ENCODE measurements at regions of chr11 and their contacts with region 1.

Region 1: DNA sequence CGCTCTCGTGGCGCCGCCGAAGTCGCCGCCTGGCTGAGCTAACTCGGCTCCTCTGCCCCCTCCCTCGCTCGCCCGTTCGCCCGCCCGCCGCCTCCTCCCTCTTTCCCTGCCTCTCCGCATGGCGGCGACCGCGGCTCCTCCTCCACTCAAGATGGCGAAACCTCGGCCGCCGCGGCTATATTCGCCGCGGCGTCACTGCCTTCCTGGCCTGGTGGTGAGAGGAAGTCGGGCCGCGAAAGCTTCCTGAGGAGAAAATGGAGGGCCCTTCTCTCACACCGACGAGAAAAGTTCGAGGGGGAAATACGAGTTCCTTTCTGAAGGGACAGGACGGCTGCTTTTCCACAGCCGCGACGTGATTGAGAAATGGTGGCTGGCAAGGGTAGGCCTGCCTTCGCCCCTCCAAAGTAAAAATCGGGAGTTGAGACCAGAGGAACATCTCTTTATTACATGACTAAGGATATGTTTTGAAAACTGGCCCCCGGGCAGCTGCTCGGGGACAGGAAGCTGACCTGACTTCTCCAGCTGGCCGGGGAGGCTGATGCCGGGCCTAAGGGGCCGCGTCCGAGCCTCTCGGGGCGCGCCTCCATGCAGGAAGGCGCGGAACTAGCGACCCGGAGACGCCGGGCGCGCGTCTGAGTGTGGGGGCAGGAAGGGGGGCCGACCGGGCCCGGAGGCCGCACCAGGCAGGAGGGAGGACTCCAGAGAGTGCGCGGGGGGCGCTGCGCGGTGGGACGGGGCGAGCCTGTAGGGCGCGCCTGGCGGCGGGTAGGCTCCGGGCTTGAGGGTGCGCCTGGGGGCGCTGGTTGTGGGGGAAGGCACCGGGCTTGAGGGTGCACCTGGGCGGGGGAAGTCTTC is at the start of gene DDX6:
- DNase-seq: peak; percentile 93
- H3K4me3 Mint-ChIP-seq: peak within 1 kb of the TSS; percentile 100
- H3K27ac Mint-ChIP-seq: peak within 1 kb of the TSS; percentile 95
- H3K4me1 Mint-ChIP-seq: peaks cover 19% of the 10 kb centered on the region
- H3K27me3 Mint-ChIP-seq: no peaks in the 10 kb centered on the region
- total RNA-seq, gene DDX6: 154 to 155 TPM

Region 2: DNA sequence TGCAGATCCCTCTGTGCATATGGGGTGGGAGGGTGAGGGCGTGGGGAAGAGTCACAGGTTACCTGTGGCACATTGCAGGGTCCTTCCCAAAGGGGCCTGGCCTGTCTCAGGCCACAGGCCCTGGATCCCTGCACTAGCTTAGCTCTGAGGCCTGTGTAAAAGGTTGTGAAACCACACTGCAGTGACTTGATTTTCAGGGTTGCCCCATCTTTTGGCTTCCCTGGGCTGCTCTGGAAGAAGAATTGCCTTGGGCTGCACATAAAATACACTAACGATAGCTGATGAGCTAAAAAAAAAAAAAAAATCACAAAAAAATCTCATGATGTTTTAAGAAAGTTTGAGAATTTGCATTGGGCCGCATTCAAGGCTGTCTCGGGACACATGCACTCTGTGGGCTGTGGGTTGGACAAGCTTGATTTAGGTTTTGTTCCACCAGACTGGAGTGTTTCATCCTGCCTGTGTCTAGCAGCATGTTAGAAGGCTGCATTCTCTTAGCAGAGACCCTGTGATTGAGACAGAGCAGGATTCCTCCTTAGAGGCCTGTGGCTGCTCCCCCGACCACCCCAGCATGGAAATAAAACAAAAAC is 76.0 kb before region 1 on chr11:
- CTCF ChIA-PET with region 1: no interaction called
- POLR2A ChIA-PET with region 1: no interaction called
- DNase-seq: no peak
- H3K4me3 Mint-ChIP-seq: no peak overlapping the region
- H3K27ac Mint-ChIP-seq: no peak overlapping the region
- H3K4me1 Mint-ChIP-seq: no peaks in the 10 kb centered on the region
- H3K27me3 Mint-ChIP-seq: peaks cover 2% of the 10 kb centered on the region

Region 3: DNA sequence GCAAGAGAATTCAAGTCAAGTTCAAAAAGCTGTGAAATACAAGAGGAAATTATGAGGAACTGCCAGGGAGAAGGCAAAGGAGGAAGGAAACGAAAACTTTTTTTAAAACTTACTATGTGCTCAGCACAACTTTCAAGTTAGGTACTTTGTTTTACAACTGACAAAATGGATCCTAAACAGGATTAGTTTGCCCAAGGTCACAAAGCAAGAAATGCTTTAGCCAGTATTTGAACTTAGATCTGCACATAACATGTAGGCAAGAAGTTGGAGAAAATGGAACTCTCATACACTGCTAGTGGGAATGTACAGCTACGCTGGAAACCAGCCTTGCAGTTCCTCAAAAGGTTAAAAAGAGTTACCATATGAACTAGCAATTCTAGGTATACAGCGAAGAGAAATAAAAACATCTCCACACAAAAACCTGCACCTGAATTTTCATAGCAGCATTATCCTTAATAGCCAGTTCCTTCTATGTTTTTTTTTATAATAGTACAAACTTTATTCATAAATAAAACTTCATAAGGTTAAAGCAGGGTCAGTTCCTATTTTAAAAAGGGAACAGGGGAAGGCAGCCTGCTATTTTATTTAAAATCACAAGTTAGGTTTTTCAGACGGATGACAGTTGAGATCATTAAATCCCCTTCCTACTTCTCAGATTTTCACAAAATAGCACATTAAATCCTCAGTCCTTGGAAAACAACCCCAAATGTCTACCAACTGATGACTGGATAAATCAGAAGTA is 19.6 kb before region 1 on chr11:
- CTCF ChIA-PET with region 1: interaction called, 4 read pairs
- POLR2A ChIA-PET with region 1: interaction called, 10 read pairs
- DNase-seq: no peak
- H3K4me3 Mint-ChIP-seq: no peak overlapping the region
- H3K27ac Mint-ChIP-seq: peak overlapping the region; percentile 13
- H3K4me1 Mint-ChIP-seq: peaks cover 53% of the 10 kb centered on the region
- H3K27me3 Mint-ChIP-seq: no peaks in the 10 kb centered on the region

Region 4: GRCh38 chr11:118851970-118852369 is 60.6 kb after region 1 on chr11:
- CTCF ChIA-PET with region 1: no interaction called
- POLR2A ChIA-PET with region 1: no interaction called
- DNase-seq: no peak
- H3K4me3 Mint-ChIP-seq: no peak overlapping the region
- H3K27ac Mint-ChIP-seq: no peak overlapping the region
- H3K4me1 Mint-ChIP-seq: peaks cover 2% of the 10 kb centered on the region
- H3K27me3 Mint-ChIP-seq: peaks cover 6% of the 10 kb centered on the region

Region 5: DNA sequence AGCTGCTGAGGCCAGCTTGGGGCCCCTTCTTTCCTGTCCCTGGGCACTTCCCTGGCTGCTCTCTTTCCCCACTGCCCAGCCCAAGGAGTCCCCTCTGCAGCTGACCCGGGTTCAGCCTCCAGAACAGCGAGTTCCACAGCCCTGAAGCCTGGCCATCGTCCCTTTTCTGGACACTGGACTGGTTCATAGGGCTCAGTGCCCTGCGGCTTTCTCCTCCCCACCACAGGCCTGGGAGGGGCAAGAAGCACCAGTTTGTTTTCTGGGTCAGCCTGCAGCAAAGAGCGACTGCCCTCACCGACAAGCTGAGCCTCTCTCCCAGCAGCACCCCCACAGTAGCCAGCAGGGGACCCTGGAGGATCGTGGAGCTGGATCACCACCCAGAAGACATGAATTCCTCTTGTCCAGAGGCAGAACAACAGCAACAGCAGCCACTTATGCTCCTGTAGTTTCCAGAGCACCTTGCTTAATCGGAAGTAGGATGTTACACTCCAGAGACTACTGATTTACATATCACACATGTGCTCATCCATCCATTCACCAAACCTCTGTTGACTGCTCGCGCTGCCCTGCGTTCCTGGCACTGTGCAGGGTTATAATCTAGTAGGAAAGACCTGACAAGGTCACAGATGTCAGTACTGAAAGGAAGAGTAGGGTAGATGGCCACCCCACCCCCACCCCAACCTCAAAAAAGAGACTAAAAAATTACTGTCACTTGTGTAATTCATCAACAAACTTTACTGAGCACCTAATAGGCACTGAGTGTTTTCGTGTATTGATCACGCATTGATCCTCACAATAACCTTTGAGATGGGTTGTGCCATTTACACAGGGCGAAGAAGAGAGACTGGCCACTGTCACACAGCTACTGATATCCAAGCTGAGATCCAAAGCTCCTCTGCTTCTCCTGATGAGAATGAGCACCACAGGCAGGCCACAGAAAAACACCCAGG is 79.3 kb after region 1 on chr11:
- CTCF ChIA-PET with region 1: interaction called, 56 read pairs
- POLR2A ChIA-PET with region 1: interaction called, 175 read pairs
- DNase-seq: peak; percentile 42
- H3K4me3 Mint-ChIP-seq: peak overlapping the region; percentile 68
- H3K27ac Mint-ChIP-seq: peak overlapping the region; percentile 97
- H3K4me1 Mint-ChIP-seq: peaks cover 55% of the 10 kb centered on the region
- H3K27me3 Mint-ChIP-seq: no peaks in the 10 kb centered on the region

Region 6: GRCh38 chr11:118895142-118896039 is 104.1 kb after region 1 on chr11:
- CTCF ChIA-PET with region 1: interaction called, 12 read pairs
- POLR2A ChIA-PET with region 1: interaction called, 99 read pairs
- DNase-seq: peak; percentile 70
- H3K4me3 Mint-ChIP-seq: peak overlapping the region; percentile 3
- H3K27ac Mint-ChIP-seq: peak overlapping the region; percentile 40
- H3K4me1 Mint-ChIP-seq: peaks cover 55% of the 10 kb centered on the region
- H3K27me3 Mint-ChIP-seq: no peaks in the 10 kb centered on the region

Region 7: DNA sequence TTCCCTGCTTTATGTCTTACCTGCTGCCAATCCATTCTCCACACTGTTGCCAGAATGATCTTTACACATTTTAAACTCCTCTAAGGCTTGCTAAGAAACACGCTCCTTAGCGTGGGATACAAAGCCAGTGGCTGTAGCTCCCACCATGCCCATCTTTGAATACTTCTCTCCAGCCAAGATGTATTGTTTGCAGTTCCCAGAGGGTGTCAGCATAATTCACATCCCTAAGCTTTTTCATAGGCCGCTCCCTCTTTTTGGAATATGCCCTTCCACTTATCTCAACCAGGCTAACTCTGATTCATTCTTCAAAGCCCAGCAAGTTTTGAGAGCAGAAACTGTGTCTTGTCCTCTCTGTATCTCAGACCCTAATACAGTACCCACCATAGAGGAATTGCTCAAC is 156.7 kb after region 1 on chr11:
- CTCF ChIA-PET with region 1: no interaction called
- POLR2A ChIA-PET with region 1: no interaction called
- DNase-seq: no peak
- H3K4me3 Mint-ChIP-seq: no peak overlapping the region
- H3K27ac Mint-ChIP-seq: no peak overlapping the region
- H3K4me1 Mint-ChIP-seq: peaks cover 4% of the 10 kb centered on the region
- H3K27me3 Mint-ChIP-seq: peaks cover 32% of the 10 kb centered on the region

Region 8: GRCh38 chr11:118997627-118998387 is 206.5 kb after region 1 on chr11 and contains the start of gene CENATAC:
- CTCF ChIA-PET with region 1: no interaction called
- POLR2A ChIA-PET with region 1: interaction called, 36 read pairs
- DNase-seq: peak; percentile 98
- H3K4me3 Mint-ChIP-seq: peak within 1 kb of the TSS; percentile 99
- H3K27ac Mint-ChIP-seq: peak within 1 kb of the TSS; percentile 95
- H3K4me1 Mint-ChIP-seq: peaks cover 36% of the 10 kb centered on the region
- H3K27me3 Mint-ChIP-seq: no peaks in the 10 kb centered on the region
- total RNA-seq, gene CENATAC: 34.6 to 35.0 TPM

Measured in activated CD4-positive, alpha-beta memory T cell treated with anti-CD3 and anti-CD28 coated beads, Interleukin-2, amount 10 ng/mL, durations not matched to agents 7 days and 5 days (primary cell).